ENCODE measurements at regions of chr18 and their contacts with region 1.

Region 1: GRCh38 chr18:24176727-24177416 is 38.0 kb downstream of the CABYR start:
- DNase-seq: peak; percentile 35
- ATAC-seq: peak; percentile 85
- H3K4me3 ChIP-seq: no peak overlapping the region
- H3K27ac ChIP-seq: no peak overlapping the region
- H3K4me1 ChIP-seq: peaks cover 0 to 8% of the 10 kb centered on the region in 2 experiments; a peak in 1 of 4 replicates
- H3K27me3 ChIP-seq: no peaks in the 10 kb centered on the region
- CTCF ChIP-seq: peak; percentile 63 to 91 (median 84)
- POLR2A ChIP-seq: no peak
- RAD21 ChIP-seq: peak; percentile 70

Region 2: GRCh38 chr18:23964282-23965238 is 212.3 kb before region 1 on chr18:
- CTCF ChIA-PET with region 1: no interaction called
- POLR2A ChIA-PET with region 1: no interaction called
- RAD21 ChIA-PET with region 1: no interaction called
- intact Hi-C with region 1: no loop called
- DNase-seq: peak; percentile 55
- ATAC-seq: peak; percentile 76
- H3K4me3 ChIP-seq: peak overlapping the region; percentile 16 to 27; a peak in 3 of 4 replicates
- H3K27ac ChIP-seq: peak overlapping the region; percentile 49
- H3K4me1 ChIP-seq: peaks cover 0 to 7% of the 10 kb centered on the region in 2 experiments; a peak in 1 of 4 replicates
- H3K27me3 ChIP-seq: no peaks in the 10 kb centered on the region; the same call in 1 of the 2 replicates
- CTCF ChIP-seq: no peak
- POLR2A ChIP-seq: no peak
- RAD21 ChIP-seq: no peak

Region 3: GRCh38 chr18:24189007-24189528 is 12.2 kb after region 1 on chr18:
- CTCF ChIA-PET with region 1: interaction called, 53 read pairs
- POLR2A ChIA-PET with region 1: no interaction called
- RAD21 ChIA-PET with region 1: no interaction called
- intact Hi-C with region 1: no loop called
- DNase-seq: no peak
- ATAC-seq: no peak
- H3K4me3 ChIP-seq: no peak overlapping the region
- H3K27ac ChIP-seq: no peak overlapping the region
- H3K4me1 ChIP-seq: 0 out of 4 replicates have a peak, but pooled peaks cover 0 to 6% of the 10 kb centered on the region in 2 experiments
- H3K27me3 ChIP-seq: no peaks in the 10 kb centered on the region
- CTCF ChIP-seq: no peak
- POLR2A ChIP-seq: no peak
- RAD21 ChIP-seq: no peak

Region 4: GRCh38 chr18:24271381-24272331 is 94.8 kb after region 1 on chr18:
- CTCF ChIA-PET with region 1: interaction called, 10 read pairs
- POLR2A ChIA-PET with region 1: no interaction called
- RAD21 ChIA-PET with region 1: no interaction called
- intact Hi-C with region 1: loop called (anchors 5 kb)
- DNase-seq: peak; percentile 49
- ATAC-seq: peak; percentile 88
- H3K4me3 ChIP-seq: peak overlapping the region; percentile 71 to 94
- H3K27ac ChIP-seq: peak overlapping the region; percentile 85
- H3K4me1 ChIP-seq: peaks cover 29 to 47% of the 10 kb centered on the region in 2 experiments; a peak in 3 of 4 replicates
- H3K27me3 ChIP-seq: no peaks in the 10 kb centered on the region
- CTCF ChIP-seq: 0 out of 6 replicates have a peak, but pooled peaks of 1 of the 3 experiments have one; percentile 15
- POLR2A ChIP-seq: no peak
- RAD21 ChIP-seq: no peak

Measured in HCT116 (cell line).